ENCODE measurements at regions of chr9 and their contacts with region 1.

Region 1: GRCh38 chr9:125484350-125485282 is 222.4 kb downstream of the MAPKAP1 start:
- DNase-seq: peak; percentile 74
- H3K4me3 ChIP-seq: no peak overlapping the region
- H3K27ac ChIP-seq: peak overlapping the region; percentile 84
- H3K27me3 ChIP-seq: no peaks in the 10 kb centered on the region
- CTCF ChIP-seq: no peak

Region 2: GRCh38 chr9:125513303-125513667 is 28.7 kb after region 1 on chr9:
- CTCF ChIA-PET with region 1: interaction called, 11 read pairs
- POLR2A ChIA-PET with region 1: no interaction called
- DNase-seq: no peak
- H3K4me3 ChIP-seq: peak overlapping the region; percentile 29
- H3K27ac ChIP-seq: peak overlapping the region; percentile 66
- H3K27me3 ChIP-seq: no peaks in the 10 kb centered on the region
- CTCF ChIP-seq: no peak